ENCODE measurements at regions of chr6 and their contacts with region 1.

Region 1: DNA sequence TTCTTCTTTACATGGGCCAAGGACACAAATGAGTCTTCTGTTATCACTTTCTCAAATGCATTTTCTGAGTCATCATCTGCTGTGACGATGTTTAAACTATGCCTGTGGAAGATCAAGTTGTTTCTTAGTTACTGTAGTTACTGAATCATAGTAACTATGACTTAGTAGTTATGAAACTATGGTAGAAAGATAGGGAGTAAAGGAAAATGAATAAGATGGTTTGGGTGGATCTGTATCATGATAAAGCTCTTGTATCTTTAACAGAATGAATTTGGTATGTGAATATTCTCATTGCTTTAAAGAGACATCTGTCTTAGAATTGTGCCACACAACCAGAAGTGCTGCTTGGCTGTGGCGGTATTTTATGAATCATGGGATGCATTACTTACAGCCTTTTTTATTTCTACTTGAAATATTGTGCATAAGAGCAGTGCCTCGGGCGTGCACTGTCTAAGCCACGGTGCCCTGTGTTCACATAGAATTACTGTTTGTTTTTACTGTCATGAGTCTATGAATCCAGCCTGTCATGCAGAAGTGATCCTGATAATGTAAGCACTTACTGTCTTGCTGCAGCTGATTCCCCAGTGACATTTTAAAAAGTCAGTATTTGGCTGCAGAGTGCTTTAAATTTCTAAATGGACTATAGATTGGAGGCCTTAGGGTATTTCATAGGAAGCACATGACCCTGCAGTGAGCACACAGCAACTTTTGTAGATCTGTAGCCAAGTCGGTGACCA is 215.2 kb downstream of the TMEM242 start:
- DNase-seq: no peak
- ATAC-seq: no peak
- H3K4me3 ChIP-seq: no peak overlapping the region
- H3K4me3 Mint-ChIP-seq: no peak overlapping the region
- H3K27ac ChIP-seq: no peak overlapping the region
- H3K27ac Mint-ChIP-seq: no peak overlapping the region
- H3K4me1 ChIP-seq: peaks cover 0 to 4% of the 10 kb centered on the region in 2 experiments
- H3K4me1 Mint-ChIP-seq: peaks cover 21 to 40% (median 36%) of the 10 kb centered on the region in 3 donors
- H3K27me3 ChIP-seq: no peaks in the 10 kb centered on the region
- H3K27me3 Mint-ChIP-seq: no peaks in the 10 kb centered on the region

Region 2: GRCh38 chr6:157072128-157072527 is 36.0 kb before region 1 on chr6:
- CTCF ChIA-PET with region 1: interaction called in 1 of 2 experiments, 10 read pairs
- POLR2A ChIA-PET with region 1: no interaction called
- DNase-seq: no peak
- ATAC-seq: no peak
- H3K4me3 ChIP-seq: no peak overlapping the region
- H3K4me3 Mint-ChIP-seq: no peak overlapping the region
- H3K27ac ChIP-seq: no peak overlapping the region
- H3K27ac Mint-ChIP-seq: no peak overlapping the region
- H3K4me1 ChIP-seq: peaks cover 2 to 7% of the 10 kb centered on the region in 2 experiments
- H3K4me1 Mint-ChIP-seq: peaks cover 68 to 72% (median 69%) of the 10 kb centered on the region in 3 donors
- H3K27me3 ChIP-seq: no peaks in the 10 kb centered on the region
- H3K27me3 Mint-ChIP-seq: no peaks in the 10 kb centered on the region

Region 3: GRCh38 chr6:157091856-157092460 is 16.1 kb before region 1 on chr6:
- CTCF ChIA-PET with region 1: no interaction called
- POLR2A ChIA-PET with region 1: no interaction called
- DNase-seq: no peak
- ATAC-seq: no peak
- H3K4me3 ChIP-seq: no peak overlapping the region
- H3K4me3 Mint-ChIP-seq: no peak overlapping the region
- H3K27ac ChIP-seq: no peak overlapping the region
- H3K27ac Mint-ChIP-seq: no peak overlapping the region
- H3K4me1 ChIP-seq: peaks cover 0 to 2% of the 10 kb centered on the region in 2 experiments
- H3K4me1 Mint-ChIP-seq: peaks cover 35 to 50% (median 49%) of the 10 kb centered on the region in 3 donors
- H3K27me3 ChIP-seq: no peaks in the 10 kb centered on the region
- H3K27me3 Mint-ChIP-seq: no peaks in the 10 kb centered on the region

Region 4: DNA sequence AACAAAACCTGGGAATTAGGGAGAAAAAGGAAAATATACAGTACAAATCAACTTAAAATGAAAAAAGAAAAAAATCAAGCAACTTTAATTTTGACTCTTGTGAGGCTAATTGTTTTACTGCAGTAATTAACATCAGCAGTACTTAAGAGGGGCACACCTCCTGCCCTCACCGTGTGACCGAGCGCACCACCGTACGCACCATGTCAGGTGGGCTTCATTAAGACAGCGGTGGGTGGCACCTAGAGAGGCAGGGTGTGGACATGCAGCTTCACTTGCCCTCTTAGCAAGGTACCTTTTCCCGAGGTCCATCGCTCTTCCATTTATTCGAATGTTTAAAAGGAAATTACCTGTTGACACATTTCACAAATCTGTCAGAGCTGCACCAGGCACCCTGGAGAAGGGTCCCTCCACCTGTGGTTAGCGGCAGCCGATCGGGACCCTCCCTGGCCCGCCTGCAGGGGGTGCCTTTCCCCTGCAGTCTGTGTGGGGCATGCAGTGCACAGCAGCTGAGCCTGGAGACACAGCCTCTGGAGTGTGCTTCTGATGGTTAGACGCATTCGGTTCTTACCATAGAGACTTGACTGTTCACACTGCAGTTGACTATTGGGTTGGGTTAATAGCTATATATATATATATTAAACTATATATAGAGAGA is 31.1 kb after region 1 on chr6:
- CTCF ChIA-PET with region 1: no interaction called
- POLR2A ChIA-PET with region 1: no interaction called
- DNase-seq: peak in 1 of 35 experiments; percentile 14
- ATAC-seq: no peak
- H3K4me3 ChIP-seq: no peak overlapping the region
- H3K4me3 Mint-ChIP-seq: no peak overlapping the region
- H3K27ac ChIP-seq: no peak overlapping the region
- H3K27ac Mint-ChIP-seq: no peak overlapping the region
- H3K4me1 ChIP-seq: peaks cover 0 to 9% of the 10 kb centered on the region in 2 experiments
- H3K4me1 Mint-ChIP-seq: peaks cover 0 to 10% (median 4%) of the 10 kb centered on the region in 3 donors
- H3K27me3 ChIP-seq: no peaks in the 10 kb centered on the region
- H3K27me3 Mint-ChIP-seq: no peaks in the 10 kb centered on the region

Region 5: GRCh38 chr6:158150701-158151100 is 1042.6 kb after region 1 on chr6:
- CTCF ChIA-PET with region 1: no interaction called
- POLR2A ChIA-PET with region 1: interaction called in 1 of 2 experiments, 10 read pairs
- DNase-seq: no peak
- ATAC-seq: no peak
- H3K4me3 ChIP-seq: no peak overlapping the region
- H3K4me3 Mint-ChIP-seq: no peak overlapping the region
- H3K27ac ChIP-seq: no peak overlapping the region
- H3K27ac Mint-ChIP-seq: no peak overlapping the region
- H3K4me1 ChIP-seq: no peaks in the 10 kb centered on the region
- H3K4me1 Mint-ChIP-seq: no peaks in the 10 kb centered on the region
- H3K27me3 ChIP-seq: no peaks in the 10 kb centered on the region
- H3K27me3 Mint-ChIP-seq: no peaks in the 10 kb centered on the region

Measured in T-cell (primary cell).